ENCODE measurements at regions of chr10 and their contacts with region 1.

Region 1: GRCh38 chr10:97037365-97038361 is 148.1 kb downstream of the SLIT1 start:
- DNase-seq: peak; percentile 89
- H3K4me3 Mint-ChIP-seq: peak overlapping the region; percentile 50
- H3K27ac Mint-ChIP-seq: no peak overlapping the region
- H3K4me1 Mint-ChIP-seq: peaks cover 9% of the 10 kb centered on the region
- H3K27me3 Mint-ChIP-seq: peaks cover 20% of the 10 kb centered on the region
- CTCF ChIP-seq: peak; percentile 83

Region 2: GRCh38 chr10:96922978-96923948 is 114.4 kb before region 1 on chr10:
- CTCF ChIA-PET with region 1: no interaction called
- POLR2A ChIA-PET with region 1: no interaction called
- intact Hi-C with region 1: no loop called
- DNase-seq: no peak
- H3K4me3 Mint-ChIP-seq: no peak overlapping the region
- H3K27ac Mint-ChIP-seq: no peak overlapping the region
- H3K4me1 Mint-ChIP-seq: peaks cover 6% of the 10 kb centered on the region
- H3K27me3 Mint-ChIP-seq: no peaks in the 10 kb centered on the region
- CTCF ChIP-seq: no peak

Region 3: GRCh38 chr10:96982155-96982930 is 55.3 kb before region 1 on chr10:
- CTCF ChIA-PET with region 1: interaction called, 11 read pairs
- POLR2A ChIA-PET with region 1: no interaction called
- intact Hi-C with region 1: no loop called
- DNase-seq: no peak
- H3K4me3 Mint-ChIP-seq: no peak overlapping the region
- H3K27ac Mint-ChIP-seq: no peak overlapping the region
- H3K4me1 Mint-ChIP-seq: no peaks in the 10 kb centered on the region
- H3K27me3 Mint-ChIP-seq: no peaks in the 10 kb centered on the region
- CTCF ChIP-seq: no peak

Region 4: GRCh38 chr10:97020452-97021400 is 16.9 kb before region 1 on chr10:
- CTCF ChIA-PET with region 1: interaction called, 41 read pairs
- POLR2A ChIA-PET with region 1: no interaction called
- intact Hi-C with region 1: no loop called
- DNase-seq: no peak
- H3K4me3 Mint-ChIP-seq: no peak overlapping the region
- H3K27ac Mint-ChIP-seq: no peak overlapping the region
- H3K4me1 Mint-ChIP-seq: peaks cover 10% of the 10 kb centered on the region
- H3K27me3 Mint-ChIP-seq: peaks cover 14% of the 10 kb centered on the region
- CTCF ChIP-seq: no peak

Region 5: GRCh38 chr10:97059006-97059871 is 21.6 kb after region 1 on chr10:
- CTCF ChIA-PET with region 1: interaction called, 41 read pairs
- POLR2A ChIA-PET with region 1: interaction called, 4 read pairs
- intact Hi-C with region 1: no loop called
- DNase-seq: no peak
- H3K4me3 Mint-ChIP-seq: no peak overlapping the region
- H3K27ac Mint-ChIP-seq: no peak overlapping the region
- H3K4me1 Mint-ChIP-seq: peaks cover 6% of the 10 kb centered on the region
- H3K27me3 Mint-ChIP-seq: peaks cover 7% of the 10 kb centered on the region
- CTCF ChIP-seq: no peak

Region 6: DNA sequence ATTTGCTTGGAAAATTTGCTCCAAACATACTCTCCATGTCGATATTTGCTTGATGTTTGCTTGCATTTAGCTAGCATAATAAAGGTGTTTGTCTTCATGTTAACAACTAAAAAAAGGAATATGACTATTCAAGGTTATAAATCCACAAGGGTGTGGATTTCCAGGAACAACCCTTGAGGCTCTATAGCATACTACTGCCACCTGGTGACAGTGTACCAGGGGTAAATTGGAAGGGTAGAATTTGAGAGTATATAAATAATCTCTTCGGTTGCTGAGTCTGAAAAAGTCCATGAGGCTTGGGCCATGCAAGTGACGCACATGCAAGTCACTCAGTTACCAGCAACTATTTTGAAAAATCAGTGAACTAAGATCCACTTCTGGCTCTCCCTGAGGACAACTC is 79.7 kb after region 1 on chr10:
- CTCF ChIA-PET with region 1: interaction called, 18 read pairs
- POLR2A ChIA-PET with region 1: no interaction called
- intact Hi-C with region 1: loop called (anchors 1 kb)
- DNase-seq: peak; percentile 37
- H3K4me3 Mint-ChIP-seq: no peak overlapping the region
- H3K27ac Mint-ChIP-seq: no peak overlapping the region
- H3K4me1 Mint-ChIP-seq: no peaks in the 10 kb centered on the region
- H3K27me3 Mint-ChIP-seq: peaks cover 58% of the 10 kb centered on the region
- CTCF ChIP-seq: peak; percentile 18

Region 7: GRCh38 chr10:97204826-97205679 is 167.4 kb after region 1 on chr10:
- CTCF ChIA-PET with region 1: interaction called, 111 read pairs
- POLR2A ChIA-PET with region 1: interaction called, 3 read pairs
- intact Hi-C with region 1: loop called (anchors 1 kb)
- DNase-seq: no peak
- H3K4me3 Mint-ChIP-seq: no peak overlapping the region
- H3K27ac Mint-ChIP-seq: no peak overlapping the region
- H3K4me1 Mint-ChIP-seq: no peaks in the 10 kb centered on the region
- H3K27me3 Mint-ChIP-seq: peaks cover 30% of the 10 kb centered on the region
- CTCF ChIP-seq: no peak

Region 8: GRCh38 chr10:97234400-97234799 is 196.7 kb after region 1 on chr10:
- CTCF ChIA-PET with region 1: interaction called, 26 read pairs
- POLR2A ChIA-PET with region 1: interaction called, 4 read pairs
- intact Hi-C with region 1: loop called (anchors 1 kb)
- DNase-seq: peak; percentile 47
- H3K4me3 Mint-ChIP-seq: no peak overlapping the region
- H3K27ac Mint-ChIP-seq: no peak overlapping the region
- H3K4me1 Mint-ChIP-seq: no peaks in the 10 kb centered on the region
- H3K27me3 Mint-ChIP-seq: no peaks in the 10 kb centered on the region
- CTCF ChIP-seq: peak; percentile 57

Measured in MCF 10A (cell line).